CD4-positive, alpha-beta memory T cell (primary cell): ENCODE measurements at regions of chr11 and their contacts with region 1.

Region 1: DNA sequence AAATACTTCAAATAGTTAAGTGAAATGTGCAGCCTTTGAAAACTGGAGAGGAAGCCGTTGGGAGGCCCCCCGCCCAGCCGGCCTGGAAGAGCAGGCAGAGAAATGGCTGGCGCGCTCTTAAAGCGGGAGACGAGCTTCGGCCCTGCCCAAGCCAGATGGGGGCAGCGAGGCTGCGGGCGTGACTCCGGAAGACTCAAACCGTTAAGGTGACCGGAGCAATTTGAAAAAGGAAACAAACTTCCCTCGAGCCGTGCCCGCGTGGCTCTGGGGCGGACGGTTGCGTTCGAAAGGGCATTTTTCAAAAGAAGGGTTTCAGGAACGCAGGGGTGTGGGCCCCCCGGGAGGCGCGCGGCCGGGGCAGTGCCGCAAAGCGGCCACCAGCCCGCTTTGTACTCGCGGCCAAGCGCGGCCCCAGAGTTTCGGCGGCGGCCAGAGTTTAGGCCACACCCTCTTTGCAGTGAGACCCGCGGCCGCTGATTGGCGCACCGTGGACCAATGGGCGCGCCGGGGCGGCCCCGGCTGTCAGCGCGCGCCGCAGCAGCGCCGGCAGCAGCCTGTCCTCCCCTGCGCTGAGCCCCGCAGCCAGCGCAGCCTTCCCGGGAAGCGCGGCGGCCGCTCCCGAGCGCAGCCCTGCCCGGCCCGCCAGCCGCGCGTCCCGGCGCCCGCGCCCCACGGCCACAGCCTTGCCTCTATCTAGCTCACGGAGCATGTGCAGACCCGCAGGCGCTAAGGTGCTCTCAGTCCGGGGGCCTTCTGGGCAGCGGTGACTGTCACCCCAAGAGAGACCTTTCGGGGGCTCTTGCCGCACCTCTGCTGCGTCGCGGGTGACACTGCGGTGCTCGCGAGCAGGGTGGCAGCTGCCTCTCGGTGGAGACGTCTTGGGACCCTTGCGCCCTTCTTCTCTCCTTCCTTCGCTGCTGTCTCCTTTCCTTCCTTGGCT is at the start of gene NAV2:
- DNase-seq: peak; percentile 70 to 81 (median 74)
- H3K4me3 ChIP-seq: peak within 1 kb of the TSS; percentile 63 to 67
- H3K4me3 Mint-ChIP-seq: peak within 1 kb of the TSS; percentile 92 to 99 (median 96)
- H3K27ac ChIP-seq: peak within 1 kb of the TSS; percentile 47
- H3K27ac Mint-ChIP-seq: peak within 1 kb of the TSS; percentile 82 to 97 (median 94)
- H3K4me1 ChIP-seq: peaks cover 20% of the 10 kb centered on the region
- H3K4me1 Mint-ChIP-seq: peaks cover 14 to 45% (median 29%) of the 10 kb centered on the region in 4 donors
- H3K27me3 ChIP-seq: peaks cover 23% of the 10 kb centered on the region
- H3K27me3 Mint-ChIP-seq: peaks cover 12 to 18% of the 10 kb centered on the region in 2 donors
- total RNA-seq, gene NAV2: 4.2 to 6.2 TPM

Region 2: DNA sequence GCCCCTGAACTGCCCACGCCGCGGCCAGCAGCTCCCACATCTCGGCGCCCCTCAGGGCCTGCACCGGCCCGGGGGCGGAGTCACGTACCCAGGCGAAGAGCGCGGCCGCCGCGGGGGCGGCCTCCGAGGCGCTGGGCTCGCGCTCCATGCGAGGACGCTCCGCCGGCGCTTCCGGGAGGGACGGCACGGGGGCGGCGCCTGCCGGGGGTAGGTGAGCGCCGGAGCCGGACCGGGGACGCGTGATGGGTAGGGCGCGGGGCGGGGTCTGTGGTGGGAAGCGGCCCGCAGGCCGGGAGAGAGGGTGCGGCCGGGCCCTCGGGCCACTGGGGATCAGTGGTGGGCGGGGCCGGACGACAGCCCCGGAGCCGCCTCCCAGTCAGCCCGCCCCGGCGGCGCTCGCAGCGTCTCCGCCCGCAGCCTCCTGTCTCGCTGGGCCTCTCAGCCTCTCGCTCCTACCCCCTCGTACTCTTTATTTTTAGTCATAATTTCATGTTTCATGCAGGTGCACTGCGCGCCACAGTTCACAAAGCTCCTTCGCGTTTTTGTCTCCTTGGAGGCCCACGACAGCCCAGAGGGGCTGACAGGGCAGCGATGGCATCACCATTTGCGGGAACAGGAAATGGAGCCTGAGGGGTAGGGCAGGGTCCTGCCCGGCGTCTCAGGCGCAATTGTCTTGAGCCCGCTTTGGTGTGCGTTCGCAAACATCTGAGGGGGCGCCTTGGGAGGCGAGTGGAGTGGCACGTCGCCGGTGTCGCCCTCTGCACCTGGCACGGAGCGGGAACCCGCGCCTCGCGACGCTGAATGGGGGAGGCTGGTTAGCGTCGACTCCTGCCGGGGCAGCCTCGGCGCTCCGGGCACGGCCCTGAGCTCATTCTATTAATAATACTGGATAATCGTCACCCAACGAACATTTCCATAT is 1699.4 kb before region 1 on chr11 and contains the start of gene SERGEF:
- CTCF ChIA-PET with region 1: no interaction called
- POLR2A ChIA-PET with region 1: no interaction called
- intact Hi-C with region 1: loop called (anchors 10 kb)
- DNase-seq: peak; percentile 91 to 92 (median 91)
- H3K4me3 ChIP-seq: peak within 1 kb of the TSS; percentile 72 to 94
- H3K4me3 Mint-ChIP-seq: peak within 1 kb of the TSS; percentile 93 to 99 (median 96)
- H3K27ac ChIP-seq: peak within 1 kb of the TSS; percentile 73
- H3K27ac Mint-ChIP-seq: peak within 1 kb of the TSS; percentile 94 to 100 (median 98)
- H3K4me1 ChIP-seq: peaks cover 19% of the 10 kb centered on the region
- H3K4me1 Mint-ChIP-seq: peaks cover 18 to 41% (median 26%) of the 10 kb centered on the region in 4 donors
- H3K27me3 ChIP-seq: no peaks in the 10 kb centered on the region
- H3K27me3 Mint-ChIP-seq: no peaks in the 10 kb centered on the region
- total RNA-seq, gene SERGEF: 46.2 to 54.1 TPM

Region 3: DNA sequence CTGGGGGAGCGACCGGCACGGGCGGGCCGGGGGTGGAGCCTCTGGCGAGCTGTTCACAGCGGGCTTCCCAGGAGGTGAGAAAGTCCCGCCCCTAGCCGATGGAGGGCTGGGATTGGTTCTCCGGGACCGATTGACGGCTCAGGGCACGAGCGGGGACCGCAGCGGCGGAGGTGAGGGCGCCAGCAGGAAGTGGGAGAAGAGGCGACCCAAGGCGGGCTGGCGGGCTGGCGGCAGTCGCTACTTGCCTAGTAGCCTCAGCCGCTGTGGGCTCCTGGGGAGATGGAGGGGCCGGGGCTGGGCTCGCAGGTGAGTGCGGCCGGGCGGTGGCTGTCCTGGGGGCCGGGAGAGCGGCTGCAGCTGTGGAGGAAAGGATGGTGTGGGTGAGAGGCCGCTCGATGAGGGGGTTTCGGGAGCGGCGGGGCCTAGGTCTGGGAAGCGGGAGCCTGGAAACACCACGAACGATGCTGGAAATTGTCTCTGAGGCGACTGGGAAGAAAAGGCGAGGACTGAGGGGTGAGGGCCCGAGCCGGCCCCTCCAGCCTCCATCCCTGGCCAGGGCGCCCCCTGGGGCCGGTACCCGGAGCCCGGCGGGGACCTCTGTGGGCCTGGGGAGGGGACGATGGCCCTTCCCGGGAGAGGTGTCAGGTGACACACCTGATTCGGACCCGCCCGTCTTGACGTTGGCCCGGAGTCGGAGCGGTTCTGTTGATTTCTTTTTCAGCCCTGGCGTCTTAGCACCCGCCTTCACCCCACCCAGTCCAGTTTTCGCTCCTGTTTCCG is 595.4 kb before region 1 on chr11 and contains the start of gene ZDHHC13:
- CTCF ChIA-PET with region 1: no interaction called
- POLR2A ChIA-PET with region 1: no interaction called
- intact Hi-C with region 1: loop called (anchors 2 kb)
- DNase-seq: peak; percentile 91 to 93 (median 92)
- H3K4me3 ChIP-seq: peak within 1 kb of the TSS; percentile 78 to 81
- H3K4me3 Mint-ChIP-seq: peak within 1 kb of the TSS; percentile 90 to 98 (median 94)
- H3K27ac ChIP-seq: peak within 1 kb of the TSS; percentile 73
- H3K27ac Mint-ChIP-seq: peak within 1 kb of the TSS; percentile 46 to 97 (median 92)
- H3K4me1 ChIP-seq: peaks cover 44% of the 10 kb centered on the region
- H3K4me1 Mint-ChIP-seq: peaks cover 40 to 59% (median 48%) of the 10 kb centered on the region in 4 donors
- H3K27me3 ChIP-seq: no peaks in the 10 kb centered on the region
- H3K27me3 Mint-ChIP-seq: peaks cover 0 to 2% of the 10 kb centered on the region in 2 donors
- total RNA-seq, gene ZDHHC13: 15.6 to 16.1 TPM

Region 4: GRCh38 chr11:19723572-19724342 is 11.2 kb after region 1 on chr11:
- CTCF ChIA-PET with region 1: interaction called, 14 read pairs
- POLR2A ChIA-PET with region 1: interaction called, 106 read pairs
- intact Hi-C with region 1: loop called (anchors 1 kb)
- DNase-seq: peak; percentile 56 to 81 (median 66)
- H3K4me3 ChIP-seq: no peak overlapping the region
- H3K4me3 Mint-ChIP-seq: peak overlapping the region in 7 of 8 donors; percentile 18 to 83 (median 62)
- H3K27ac ChIP-seq: peak overlapping the region; percentile 30
- H3K27ac Mint-ChIP-seq: peak overlapping the region; percentile 90 to 98 (median 94)
- H3K4me1 ChIP-seq: peaks cover 31% of the 10 kb centered on the region
- H3K4me1 Mint-ChIP-seq: peaks cover 29 to 59% (median 35%) of the 10 kb centered on the region in 4 donors
- H3K27me3 ChIP-seq: no peaks in the 10 kb centered on the region
- H3K27me3 Mint-ChIP-seq: no peaks in the 10 kb centered on the region

Region 5: DNA sequence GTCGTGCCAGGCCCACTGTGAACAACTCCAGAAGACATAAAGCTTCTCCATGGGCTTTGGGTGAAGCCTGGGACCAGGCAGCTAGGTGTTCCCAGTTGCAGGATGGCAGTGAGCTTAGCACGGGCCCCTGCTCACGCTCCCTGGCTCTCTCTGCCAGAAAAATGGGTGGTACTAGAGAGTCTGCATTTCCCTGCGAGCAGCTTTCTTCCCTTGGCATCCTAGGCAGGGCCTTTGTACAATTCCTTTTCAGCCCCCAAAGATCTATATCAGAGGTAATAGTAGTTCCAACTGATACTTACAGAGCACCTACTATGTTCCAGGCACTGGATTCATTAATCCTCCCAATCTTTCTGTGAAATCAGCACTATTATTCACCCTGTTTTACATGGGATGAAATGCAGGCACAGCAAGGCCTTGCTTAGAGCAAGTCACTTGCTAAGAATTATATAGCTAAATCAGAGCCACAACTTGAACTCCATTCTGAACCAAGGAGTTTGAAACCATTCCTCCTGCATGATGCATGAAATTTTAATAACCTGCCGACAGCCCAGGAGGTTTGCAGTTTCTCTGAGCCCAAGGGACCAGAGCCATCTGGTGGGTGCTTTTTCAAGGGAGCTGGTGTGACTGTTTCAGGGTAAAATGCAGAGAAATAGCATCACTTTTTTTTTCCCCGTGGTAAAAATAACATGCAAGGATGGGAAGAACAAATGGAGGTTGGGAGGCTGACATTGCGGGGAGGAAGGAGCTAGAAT is 22.8 kb after region 1 on chr11:
- CTCF ChIA-PET with region 1: interaction called, 4 read pairs
- POLR2A ChIA-PET with region 1: interaction called, 14 read pairs
- intact Hi-C with region 1: no loop called
- DNase-seq: no peak
- H3K4me3 ChIP-seq: no peak overlapping the region
- H3K4me3 Mint-ChIP-seq: no peak overlapping the region
- H3K27ac ChIP-seq: no peak overlapping the region
- H3K27ac Mint-ChIP-seq: peak overlapping the region in 1 of 7 donors; percentile 25
- H3K4me1 ChIP-seq: no peaks in the 10 kb centered on the region
- H3K4me1 Mint-ChIP-seq: no peaks in the 10 kb centered on the region
- H3K27me3 ChIP-seq: no peaks in the 10 kb centered on the region
- H3K27me3 Mint-ChIP-seq: peaks cover 0 to 2% of the 10 kb centered on the region in 2 donors